GM12878 (cell line): ENCODE measurements at regions of chr1 and their contacts with region 1.

Region 1: DNA sequence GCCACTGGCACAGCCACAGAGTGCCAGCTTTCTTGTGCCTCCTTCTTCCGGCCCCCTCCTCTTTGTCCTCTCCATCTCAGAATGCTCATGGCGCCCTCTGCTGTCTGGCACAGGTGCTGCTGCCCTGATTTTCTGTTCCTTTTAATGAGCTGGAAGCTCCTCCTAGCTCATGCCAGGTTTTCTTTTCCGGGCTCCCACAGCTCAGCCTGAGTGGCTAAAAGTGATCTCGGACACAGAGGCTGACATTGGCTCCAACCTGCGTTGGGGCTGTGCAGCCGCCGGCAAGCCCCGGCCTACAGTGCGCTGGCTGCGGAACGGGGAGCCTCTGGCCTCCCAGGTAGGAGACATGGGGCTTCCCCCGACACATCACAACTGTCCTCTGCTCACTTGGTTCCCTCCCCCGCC is 18.7 kb downstream of the CNTN2 start:
- DNase-seq: peak; percentile 20
- ATAC-seq: peak; percentile 92
- H3K4me3 ChIP-seq: no peak overlapping the region
- H3K27ac ChIP-seq: no peak overlapping the region
- H3K4me1 ChIP-seq: no peaks in the 10 kb centered on the region
- H3K27me3 ChIP-seq: no peaks in the 10 kb centered on the region
- CTCF ChIP-seq: peak; percentile 84 to 93 (median 92); a peak in 5 of 6 replicates
- EP300 ChIP-seq: no peak
- POLR2A ChIP-seq: no peak
- RAD21 ChIP-seq: peak; percentile 75

Region 2: DNA sequence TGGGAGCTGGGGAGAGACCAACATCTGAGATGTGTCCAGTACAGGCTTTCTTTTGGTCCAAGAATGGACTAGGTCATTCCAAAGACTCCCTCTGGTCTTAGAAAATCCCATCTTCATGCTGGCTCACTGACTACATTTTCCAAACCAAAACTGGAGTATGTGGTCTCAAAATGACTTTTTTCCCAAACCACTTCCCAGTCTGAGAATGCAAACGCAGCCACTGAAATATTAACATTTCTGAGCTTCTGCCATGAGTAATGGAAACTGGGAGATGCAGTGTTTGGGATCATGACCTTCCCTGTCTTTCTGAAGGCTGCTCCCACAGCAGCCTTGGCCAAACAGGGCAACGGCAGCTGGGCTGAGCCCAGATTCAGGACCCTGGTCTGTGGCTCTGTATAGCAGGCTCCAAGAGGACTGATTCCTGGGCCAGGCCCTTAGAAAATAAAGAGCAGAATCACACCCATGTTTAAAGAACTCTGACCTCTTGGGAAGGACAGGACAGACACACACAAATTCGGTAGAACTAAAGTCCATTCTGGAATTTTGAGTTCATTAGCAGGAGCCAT is 80.7 kb before region 1 on chr1:
- CTCF ChIA-PET with region 1: interaction called, 119 read pairs
- POLR2A ChIA-PET with region 1: interaction called, 3 read pairs
- RAD21 ChIA-PET with region 1: interaction called, 47 read pairs
- SMC1A ChIA-PET with region 1: interaction called, 35 read pairs
- in situ Hi-C with region 1: loop called (anchors 5 kb)
- intact Hi-C with region 1: no loop called
- DNase-seq: no peak
- ATAC-seq: no peak
- H3K4me3 ChIP-seq: no peak overlapping the region
- H3K27ac ChIP-seq: no peak overlapping the region
- H3K4me1 ChIP-seq: peaks cover 6% of the 10 kb centered on the region
- H3K27me3 ChIP-seq: peaks cover 0 to 2% of the 10 kb centered on the region in 2 experiments; a peak in 2 of 4 replicates
- CTCF ChIP-seq: no peak
- EP300 ChIP-seq: no peak
- POLR2A ChIP-seq: no peak
- RAD21 ChIP-seq: no peak

Region 3: DNA sequence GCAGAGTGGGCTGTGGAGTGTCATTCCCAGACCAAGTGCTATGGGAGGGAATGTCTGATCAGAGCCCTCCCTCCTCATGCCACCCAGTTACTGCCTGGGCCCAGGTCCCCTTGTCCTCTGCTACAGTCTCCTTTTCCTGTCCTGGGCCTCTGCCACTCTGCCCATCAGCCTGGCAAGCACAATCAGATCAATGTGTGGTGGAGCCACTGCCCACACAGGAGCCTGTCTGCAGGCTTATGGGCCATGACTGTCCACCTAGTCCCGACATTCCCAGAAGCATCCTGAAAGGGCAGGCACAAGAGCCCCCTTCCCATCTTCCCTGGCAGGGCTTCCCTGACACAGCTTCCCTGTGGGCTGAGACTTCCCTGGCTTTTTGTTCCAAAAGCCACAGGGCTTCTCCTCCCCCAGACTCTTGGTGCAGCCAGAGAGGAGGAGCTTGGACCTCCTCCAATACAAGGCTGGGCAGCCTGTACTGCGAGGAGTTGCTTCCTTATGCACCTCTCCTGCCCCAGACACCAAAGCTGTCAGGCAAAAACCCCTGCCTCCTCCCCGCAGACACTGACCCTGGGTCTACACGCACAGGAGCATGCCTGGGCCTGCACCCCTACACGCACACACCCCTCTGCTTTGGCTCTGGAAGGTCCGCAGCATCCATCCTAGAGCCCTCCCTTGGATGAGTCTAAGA is 47.8 kb before region 1 on chr1:
- CTCF ChIA-PET with region 1: interaction called, 10 read pairs
- POLR2A ChIA-PET with region 1: no interaction called
- RAD21 ChIA-PET with region 1: no interaction called
- SMC1A ChIA-PET with region 1: no interaction called
- in situ Hi-C with region 1: no loop called
- intact Hi-C with region 1: no loop called
- DNase-seq: no peak
- ATAC-seq: peak; percentile 44; the same call in 2 of the 3 replicates
- H3K4me3 ChIP-seq: no peak overlapping the region
- H3K27ac ChIP-seq: no peak overlapping the region
- H3K4me1 ChIP-seq: no peaks in the 10 kb centered on the region
- H3K27me3 ChIP-seq: peaks cover 0 to 9% of the 10 kb centered on the region in 2 experiments; a peak in 3 of 4 replicates
- CTCF ChIP-seq: no peak
- EP300 ChIP-seq: no peak
- POLR2A ChIP-seq: no peak
- RAD21 ChIP-seq: no peak

Region 4: GRCh38 chr1:205048382-205048781 is 13.3 kb before region 1 on chr1:
- CTCF ChIA-PET with region 1: interaction called, 35 read pairs
- POLR2A ChIA-PET with region 1: no interaction called
- RAD21 ChIA-PET with region 1: no interaction called
- SMC1A ChIA-PET with region 1: interaction called, 3 read pairs
- in situ Hi-C with region 1: no loop called
- intact Hi-C with region 1: no loop called
- DNase-seq: no peak
- ATAC-seq: no peak
- H3K4me3 ChIP-seq: no peak overlapping the region
- H3K27ac ChIP-seq: no peak overlapping the region
- H3K4me1 ChIP-seq: no peaks in the 10 kb centered on the region
- H3K27me3 ChIP-seq: peaks cover 0 to 10% of the 10 kb centered on the region in 2 experiments; a peak in 3 of 4 replicates
- CTCF ChIP-seq: no peak
- EP300 ChIP-seq: no peak
- POLR2A ChIP-seq: no peak
- RAD21 ChIP-seq: no peak

Region 5: GRCh38 chr1:205108464-205108863 is 46.8 kb after region 1 on chr1:
- CTCF ChIA-PET with region 1: interaction called, 11 read pairs
- POLR2A ChIA-PET with region 1: no interaction called
- RAD21 ChIA-PET with region 1: interaction called, 5 read pairs
- SMC1A ChIA-PET with region 1: interaction called, 4 read pairs
- in situ Hi-C with region 1: no loop called
- intact Hi-C with region 1: no loop called
- DNase-seq: no peak
- ATAC-seq: no peak
- H3K4me3 ChIP-seq: no peak overlapping the region
- H3K27ac ChIP-seq: no peak overlapping the region
- H3K4me1 ChIP-seq: no peaks in the 10 kb centered on the region
- H3K27me3 ChIP-seq: no peaks in the 10 kb centered on the region
- CTCF ChIP-seq: no peak
- EP300 ChIP-seq: no peak
- POLR2A ChIP-seq: no peak
- RAD21 ChIP-seq: no peak

Region 6: GRCh38 chr1:205199090-205199930 is 137.6 kb after region 1 on chr1:
- CTCF ChIA-PET with region 1: interaction called, 10 read pairs
- POLR2A ChIA-PET with region 1: no interaction called
- RAD21 ChIA-PET with region 1: no interaction called
- SMC1A ChIA-PET with region 1: no interaction called
- in situ Hi-C with region 1: no loop called
- intact Hi-C with region 1: no loop called
- DNase-seq: no peak
- ATAC-seq: peak; percentile 67
- H3K4me3 ChIP-seq: no peak overlapping the region
- H3K27ac ChIP-seq: no peak overlapping the region
- H3K4me1 ChIP-seq: peaks cover 3% of the 10 kb centered on the region; the same call in 1 of the 2 replicates
- H3K27me3 ChIP-seq: no peaks in the 10 kb centered on the region
- CTCF ChIP-seq: peak in 1 of 3 experiments; percentile 13; a peak in 1 of 6 replicates
- EP300 ChIP-seq: no peak
- POLR2A ChIP-seq: no peak
- RAD21 ChIP-seq: peak; percentile 20; the same call in 1 of the 2 replicates

Region 7: DNA sequence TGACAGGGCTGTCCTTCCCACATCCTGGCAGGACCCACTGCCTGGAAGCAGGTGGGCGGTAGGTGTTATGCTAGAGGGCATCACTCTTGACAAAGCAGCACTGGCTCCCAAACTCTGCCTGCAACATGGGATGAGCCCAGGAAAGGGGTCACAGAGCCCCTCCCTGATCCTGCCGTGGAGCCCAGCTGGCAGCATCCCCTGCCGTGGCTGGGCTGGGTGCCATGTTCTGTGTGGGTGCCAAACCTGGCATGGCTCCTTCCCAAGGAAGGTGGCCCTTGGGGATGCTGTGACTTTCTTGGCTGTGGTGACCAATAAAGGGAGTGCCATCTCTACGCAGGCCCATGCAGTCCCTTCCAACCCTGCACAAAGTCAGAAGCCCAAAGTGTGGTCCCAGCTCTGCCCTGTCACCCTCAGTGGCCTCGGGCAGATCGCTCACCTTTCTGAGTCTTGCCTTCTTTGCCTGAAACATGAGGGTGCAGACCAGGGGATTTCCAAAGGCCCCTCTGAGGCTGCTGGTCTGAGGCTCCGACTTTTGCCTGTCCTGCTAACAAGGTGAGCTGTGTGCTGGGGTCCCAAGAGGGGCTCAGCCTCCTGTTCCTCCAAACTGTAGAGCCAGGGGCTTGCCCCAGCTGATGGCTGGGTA is 448.8 kb after region 1 on chr1:
- CTCF ChIA-PET with region 1: no interaction called
- POLR2A ChIA-PET with region 1: no interaction called
- RAD21 ChIA-PET with region 1: no interaction called
- SMC1A ChIA-PET with region 1: no interaction called
- in situ Hi-C with region 1: no loop called
- intact Hi-C with region 1: no loop called
- DNase-seq: no peak
- ATAC-seq: peak; percentile 62
- H3K4me3 ChIP-seq: no peak overlapping the region
- H3K27ac ChIP-seq: no peak overlapping the region
- H3K4me1 ChIP-seq: no peaks in the 10 kb centered on the region
- H3K27me3 ChIP-seq: peaks cover 0 to 2% of the 10 kb centered on the region in 2 experiments; a peak in 2 of 4 replicates
- CTCF ChIP-seq: no peak
- EP300 ChIP-seq: no peak
- POLR2A ChIP-seq: no peak
- RAD21 ChIP-seq: no peak